Activated CD8-positive, alpha-beta T cell treated with anti-CD3 and anti-CD28 coated beads for 36 hours (primary cell): ENCODE measurements at regions of chr6 and their contacts with region 1.

Region 1: DNA sequence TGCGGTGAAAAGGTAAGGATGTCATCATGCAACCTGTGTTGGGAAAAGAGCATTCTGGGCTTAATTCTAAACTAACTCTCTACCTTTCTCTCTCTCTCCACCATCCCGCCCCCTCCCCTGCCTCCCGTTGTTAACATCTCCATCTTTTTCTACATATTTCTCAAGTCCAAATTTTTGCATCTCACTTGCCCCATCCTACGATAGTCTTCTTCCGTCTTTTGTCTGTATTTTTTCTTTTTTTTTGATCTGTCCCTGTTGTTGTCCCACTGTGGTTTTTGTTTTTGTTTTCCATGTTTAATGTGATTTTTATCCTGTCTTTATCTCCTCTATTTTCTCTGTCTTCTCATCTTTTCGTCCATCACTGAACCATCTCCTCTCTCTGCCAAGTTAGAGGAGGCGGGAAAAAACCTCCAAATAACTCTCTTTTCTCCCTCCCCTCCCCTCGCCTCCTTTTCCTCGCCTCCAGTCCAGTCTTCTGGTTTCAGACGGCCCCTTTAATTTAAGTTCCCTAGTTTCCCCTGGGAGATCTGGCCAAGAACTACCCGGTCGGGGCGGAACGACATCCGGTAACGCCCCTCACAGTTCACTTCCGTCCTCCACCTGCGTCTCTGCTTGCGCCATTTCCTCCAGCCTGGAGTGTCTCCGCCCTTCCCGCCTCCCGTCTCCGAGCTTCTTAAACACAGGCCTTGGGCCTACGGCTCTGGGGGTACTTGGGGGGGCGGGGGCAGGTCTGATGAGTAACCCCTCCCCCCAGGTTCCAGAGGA is at the start of gene NFKBIL1:
- DNase-seq: peak; percentile 97
- ATAC-seq: peak; percentile 85
- H3K4me3 Mint-ChIP-seq: peak within 1 kb of the TSS; percentile 80
- H3K27ac Mint-ChIP-seq: peak within 1 kb of the TSS; percentile 80
- H3K4me1 Mint-ChIP-seq: peaks cover 40% of the 10 kb centered on the region
- H3K27me3 Mint-ChIP-seq: no peaks in the 10 kb centered on the region
- CTCF ChIP-seq: peak; percentile 64
- total RNA-seq, gene NFKBIL1: 11.3 to 13.0 TPM

Region 2: GRCh38 chr6:31366693-31367470 is 180.3 kb before region 1 on chr6:
- CTCF ChIA-PET with region 1: no interaction called
- POLR2A ChIA-PET with region 1: no interaction called
- intact Hi-C with region 1: no loop called
- DNase-seq: peak; percentile 88
- ATAC-seq: peak; percentile 96
- H3K4me3 Mint-ChIP-seq: peak overlapping the region; percentile 77
- H3K27ac Mint-ChIP-seq: no peak overlapping the region
- H3K4me1 Mint-ChIP-seq: peaks cover 17% of the 10 kb centered on the region
- H3K27me3 Mint-ChIP-seq: peaks cover 18% of the 10 kb centered on the region
- CTCF ChIP-seq: peak; percentile 97

Region 3: GRCh38 chr6:31403283-31403989 is 143.7 kb before region 1 on chr6 and contains the start of gene MICA:
- CTCF ChIA-PET with region 1: no interaction called
- POLR2A ChIA-PET with region 1: no interaction called
- intact Hi-C with region 1: no loop called
- DNase-seq: peak; percentile 77
- ATAC-seq: peak; percentile 68
- H3K4me3 Mint-ChIP-seq: peak within 1 kb of the TSS; percentile 81
- H3K27ac Mint-ChIP-seq: peak within 1 kb of the TSS; percentile 71
- H3K4me1 Mint-ChIP-seq: peaks cover 57% of the 10 kb centered on the region
- H3K27me3 Mint-ChIP-seq: no peaks in the 10 kb centered on the region
- CTCF ChIP-seq: no peak
- total RNA-seq, gene MICA: 5.6 to 6.0 TPM

Region 4: DNA sequence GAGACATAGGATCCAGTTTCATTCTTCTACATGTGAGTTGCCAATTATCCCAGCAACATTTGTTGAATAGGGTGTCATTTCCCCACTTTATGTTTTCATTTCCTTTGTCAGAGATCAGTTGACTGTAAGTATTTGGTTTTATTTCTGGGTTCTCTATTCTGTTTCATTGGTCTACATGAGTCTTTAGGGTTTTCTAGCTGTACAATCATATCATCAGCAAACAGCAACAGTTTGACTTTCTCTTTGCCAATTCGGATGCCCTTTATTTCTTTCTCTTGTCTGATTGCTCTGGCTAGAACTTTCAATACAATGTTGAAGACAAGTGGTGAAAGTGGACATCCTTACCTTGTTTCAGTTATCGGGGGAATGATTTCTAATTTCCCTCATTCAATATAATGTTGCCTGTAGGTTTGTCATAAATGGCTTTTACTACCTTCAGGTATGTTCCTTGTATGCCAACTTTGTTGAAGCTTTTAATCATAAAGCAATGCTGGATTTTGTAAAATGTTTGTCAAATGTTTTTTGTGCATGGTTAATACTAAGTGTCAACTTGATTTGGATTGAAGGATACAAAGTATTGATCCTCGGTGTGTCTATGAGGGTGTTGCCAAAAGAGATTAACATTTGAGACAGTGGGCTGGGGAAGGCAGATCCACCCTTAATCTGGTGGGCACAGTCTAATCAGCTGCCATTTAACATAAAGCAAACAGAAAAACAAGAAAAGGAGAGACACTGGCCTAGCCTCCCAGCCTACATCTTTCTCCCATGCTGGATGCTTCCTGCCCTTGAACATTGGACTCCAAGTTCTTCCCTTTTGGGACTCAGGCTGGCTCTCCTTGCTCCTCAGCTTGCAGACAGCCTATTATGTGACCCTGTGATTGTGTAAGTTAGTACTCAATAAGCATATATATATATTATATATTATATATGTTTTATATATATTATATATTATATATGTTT is 120.5 kb before region 1 on chr6:
- CTCF ChIA-PET with region 1: no interaction called
- POLR2A ChIA-PET with region 1: no interaction called
- intact Hi-C with region 1: no loop called
- DNase-seq: no peak
- ATAC-seq: no peak
- H3K4me3 Mint-ChIP-seq: no peak overlapping the region
- H3K27ac Mint-ChIP-seq: no peak overlapping the region
- H3K4me1 Mint-ChIP-seq: no peaks in the 10 kb centered on the region
- H3K27me3 Mint-ChIP-seq: no peaks in the 10 kb centered on the region
- CTCF ChIP-seq: no peak

Region 5: DNA sequence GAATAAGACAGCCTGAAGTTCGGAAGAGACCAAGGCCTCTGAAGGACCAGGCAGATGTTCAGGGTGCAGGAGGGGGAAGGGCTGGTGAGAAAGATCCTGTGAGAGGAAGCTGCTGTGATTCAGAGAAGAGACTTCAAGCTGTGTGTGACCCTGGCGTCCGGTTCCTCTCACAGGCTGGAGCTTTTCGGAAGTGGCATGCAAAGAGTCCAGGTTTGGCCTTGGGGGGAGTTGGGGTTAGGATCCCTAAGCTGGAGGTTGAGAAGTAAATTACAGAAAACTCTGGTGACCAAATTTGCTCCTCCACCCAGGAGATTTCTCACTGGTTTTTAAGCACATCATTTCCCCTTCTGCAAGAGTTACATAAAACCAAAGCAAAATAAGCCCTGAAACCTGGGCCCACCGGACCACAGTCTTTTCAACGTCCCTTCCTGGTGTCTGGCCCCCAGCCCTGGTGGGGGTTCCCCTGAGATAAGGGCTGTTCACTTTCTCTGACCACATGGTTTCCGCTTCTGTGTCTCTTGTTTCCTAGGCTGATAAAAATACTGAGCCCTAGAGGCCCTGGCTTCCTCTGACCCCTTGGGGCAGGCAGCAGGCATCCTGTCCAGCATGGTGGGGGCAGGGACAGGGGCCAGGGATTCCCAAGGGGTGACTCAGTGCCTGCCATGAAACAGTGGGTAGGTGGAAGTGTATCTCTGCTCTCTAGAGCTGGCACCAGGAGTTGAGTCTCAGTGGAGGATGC is 13.0 kb after region 1 on chr6:
- CTCF ChIA-PET with region 1: interaction called, 25 read pairs
- POLR2A ChIA-PET with region 1: interaction called, 8 read pairs
- intact Hi-C with region 1: no loop called
- DNase-seq: peak; percentile 86
- ATAC-seq: peak; percentile 69
- H3K4me3 Mint-ChIP-seq: peak overlapping the region; percentile 56
- H3K27ac Mint-ChIP-seq: peak overlapping the region; percentile 90
- H3K4me1 Mint-ChIP-seq: peaks cover 78% of the 10 kb centered on the region
- H3K27me3 Mint-ChIP-seq: no peaks in the 10 kb centered on the region
- CTCF ChIP-seq: no peak

Region 6: GRCh38 chr6:31575335-31575901 is 28.3 kb after region 1 on chr6 and contains the start of gene TNF:
- CTCF ChIA-PET with region 1: interaction called, 2,542 read pairs
- POLR2A ChIA-PET with region 1: interaction called, 97 read pairs
- intact Hi-C with region 1: loop called (anchors 5 kb)
- DNase-seq: peak; percentile 87
- ATAC-seq: peak; percentile 21
- H3K4me3 Mint-ChIP-seq: peak within 1 kb of the TSS; percentile 96
- H3K27ac Mint-ChIP-seq: peak within 1 kb of the TSS; percentile 97
- H3K4me1 Mint-ChIP-seq: peaks cover 54% of the 10 kb centered on the region
- H3K27me3 Mint-ChIP-seq: no peaks in the 10 kb centered on the region
- CTCF ChIP-seq: no peak
- total RNA-seq, gene TNF: 89.2 to 92.5 TPM

Region 7: DNA sequence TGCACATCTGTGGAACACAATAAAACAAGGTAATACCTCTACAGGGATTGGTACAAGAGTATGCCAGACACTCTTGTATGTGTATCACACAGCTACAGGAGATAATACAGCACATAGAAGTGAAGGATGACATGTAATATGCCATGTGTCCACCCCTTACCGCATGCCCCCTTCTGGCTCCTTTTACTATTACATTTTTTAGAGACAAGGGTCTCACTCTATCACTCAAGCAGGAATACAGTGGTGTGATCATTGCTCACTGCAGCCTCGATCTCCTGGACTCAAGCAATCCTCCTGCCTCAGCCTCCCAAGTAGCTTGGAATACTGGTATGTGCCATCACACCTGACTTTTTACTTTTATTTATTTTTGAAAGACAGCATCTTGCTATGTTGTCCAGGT is 49.9 kb after region 1 on chr6:
- CTCF ChIA-PET with region 1: interaction called, 2,542 read pairs
- POLR2A ChIA-PET with region 1: interaction called, 32 read pairs
- intact Hi-C with region 1: loop called (anchors 1 kb)
- DNase-seq: peak; percentile 71
- ATAC-seq: peak; percentile 68
- H3K4me3 Mint-ChIP-seq: no peak overlapping the region
- H3K27ac Mint-ChIP-seq: peak overlapping the region; percentile 37
- H3K4me1 Mint-ChIP-seq: peaks cover 43% of the 10 kb centered on the region
- H3K27me3 Mint-ChIP-seq: no peaks in the 10 kb centered on the region
- CTCF ChIP-seq: peak; percentile 80